ENCODE measurements at regions of chr9 and their contacts with region 1.

Region 1: DNA sequence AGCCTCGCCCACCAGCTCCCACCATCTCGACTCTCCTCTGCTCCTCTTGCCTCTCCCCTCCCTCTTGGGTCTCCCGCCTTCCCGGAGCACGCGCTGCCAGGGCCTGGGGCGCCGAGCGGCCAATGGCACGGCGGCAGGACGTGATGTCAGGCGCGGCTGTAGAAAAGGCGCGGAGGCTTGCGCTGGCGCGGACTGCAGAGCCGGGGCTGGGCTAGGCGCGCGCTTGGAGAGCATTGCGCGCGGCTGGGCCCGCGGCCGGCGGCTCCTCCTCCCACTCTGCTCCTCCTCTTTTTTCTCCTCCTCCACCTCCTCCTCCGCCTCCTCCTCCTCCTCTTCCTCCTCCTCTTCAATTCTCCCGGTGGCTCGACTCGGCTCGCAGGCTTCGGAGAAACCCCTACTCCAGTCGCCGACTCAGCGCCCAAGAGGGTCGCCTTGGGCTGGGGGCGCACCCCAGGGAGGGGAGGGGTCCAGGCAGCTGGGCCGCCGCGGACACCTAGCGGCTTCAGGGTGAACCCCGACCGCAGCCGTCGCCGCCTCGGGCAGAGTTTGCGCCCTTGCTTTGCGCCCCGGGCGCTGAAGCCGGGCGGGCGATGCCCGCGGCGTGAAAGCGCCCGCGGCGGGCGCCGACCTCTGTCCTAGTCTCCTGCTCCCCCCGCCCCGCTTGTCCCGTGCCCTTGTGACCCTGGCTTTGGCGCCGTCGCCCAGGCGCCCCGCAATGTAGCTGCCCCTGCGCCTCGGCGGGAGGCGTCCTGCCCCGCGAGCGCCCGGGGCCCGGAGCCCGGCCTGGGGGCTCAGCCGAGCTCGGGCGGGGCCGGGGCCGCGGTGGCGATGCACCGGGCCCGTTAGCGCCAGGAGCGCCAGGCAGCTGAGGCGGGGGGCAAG is at the start of gene LHX2:
- DNase-seq: peak; percentile 83
- ATAC-seq: peak; percentile 80
- H3K4me3 Mint-ChIP-seq: peak within 1 kb of the TSS; percentile 23
- H3K27ac Mint-ChIP-seq: no peak within 1 kb of the TSS
- H3K4me1 Mint-ChIP-seq: peaks cover 29% of the 10 kb centered on the region
- H3K27me3 Mint-ChIP-seq: peaks cover 64% of the 10 kb centered on the region
- total RNA-seq, gene LHX2: not detected

Region 2: DNA sequence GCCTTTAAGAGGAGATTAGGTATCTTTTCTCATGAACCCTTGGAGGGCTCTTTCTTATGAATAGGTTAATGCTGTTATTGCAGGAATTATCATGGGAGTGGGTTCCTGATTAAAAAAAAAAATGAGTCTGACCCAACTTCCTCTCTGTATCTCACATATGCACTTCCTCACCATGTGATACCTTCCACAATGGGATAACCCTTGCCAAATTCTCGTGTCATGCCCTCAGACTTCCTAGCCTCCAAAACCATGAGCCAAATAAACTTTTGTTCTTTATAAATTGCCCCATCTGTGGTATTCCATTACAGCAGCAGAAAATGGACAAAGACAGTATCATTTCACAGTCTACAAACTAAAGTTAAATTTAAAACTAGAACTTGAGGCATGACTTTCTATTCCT is 1355.3 kb before region 1 on chr9:
- CTCF ChIA-PET with region 1: no interaction called
- POLR2A ChIA-PET with region 1: no interaction called
- intact Hi-C with region 1: no loop called
- DNase-seq: no peak
- ATAC-seq: no peak
- H3K4me3 Mint-ChIP-seq: no peak overlapping the region
- H3K27ac Mint-ChIP-seq: no peak overlapping the region
- H3K4me1 Mint-ChIP-seq: no peaks in the 10 kb centered on the region
- H3K27me3 Mint-ChIP-seq: peaks cover 3% of the 10 kb centered on the region

Region 3: DNA sequence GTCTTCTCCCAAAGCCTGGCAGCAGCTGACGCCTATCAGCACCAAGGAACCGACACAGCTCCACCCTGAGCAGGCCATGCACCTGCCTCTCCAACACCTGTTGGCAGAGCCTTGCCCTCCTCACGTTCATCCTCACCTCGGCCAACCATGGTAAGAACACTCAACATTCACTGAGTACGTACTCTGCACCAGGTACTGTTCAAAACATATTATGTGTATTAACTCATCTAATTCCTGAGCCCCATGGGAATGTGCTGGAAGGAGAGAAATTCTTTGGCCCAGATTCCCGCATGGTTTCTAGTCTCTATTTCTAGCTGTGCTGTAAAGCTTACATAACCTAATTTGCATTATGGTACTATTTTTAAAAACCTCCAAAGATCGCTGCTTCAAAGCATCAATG is 892.1 kb before region 1 on chr9:
- CTCF ChIA-PET with region 1: no interaction called
- POLR2A ChIA-PET with region 1: no interaction called
- intact Hi-C with region 1: no loop called
- DNase-seq: no peak
- ATAC-seq: no peak
- H3K4me3 Mint-ChIP-seq: no peak overlapping the region
- H3K27ac Mint-ChIP-seq: no peak overlapping the region
- H3K4me1 Mint-ChIP-seq: peaks cover 6% of the 10 kb centered on the region
- H3K27me3 Mint-ChIP-seq: no peaks in the 10 kb centered on the region

Region 4: DNA sequence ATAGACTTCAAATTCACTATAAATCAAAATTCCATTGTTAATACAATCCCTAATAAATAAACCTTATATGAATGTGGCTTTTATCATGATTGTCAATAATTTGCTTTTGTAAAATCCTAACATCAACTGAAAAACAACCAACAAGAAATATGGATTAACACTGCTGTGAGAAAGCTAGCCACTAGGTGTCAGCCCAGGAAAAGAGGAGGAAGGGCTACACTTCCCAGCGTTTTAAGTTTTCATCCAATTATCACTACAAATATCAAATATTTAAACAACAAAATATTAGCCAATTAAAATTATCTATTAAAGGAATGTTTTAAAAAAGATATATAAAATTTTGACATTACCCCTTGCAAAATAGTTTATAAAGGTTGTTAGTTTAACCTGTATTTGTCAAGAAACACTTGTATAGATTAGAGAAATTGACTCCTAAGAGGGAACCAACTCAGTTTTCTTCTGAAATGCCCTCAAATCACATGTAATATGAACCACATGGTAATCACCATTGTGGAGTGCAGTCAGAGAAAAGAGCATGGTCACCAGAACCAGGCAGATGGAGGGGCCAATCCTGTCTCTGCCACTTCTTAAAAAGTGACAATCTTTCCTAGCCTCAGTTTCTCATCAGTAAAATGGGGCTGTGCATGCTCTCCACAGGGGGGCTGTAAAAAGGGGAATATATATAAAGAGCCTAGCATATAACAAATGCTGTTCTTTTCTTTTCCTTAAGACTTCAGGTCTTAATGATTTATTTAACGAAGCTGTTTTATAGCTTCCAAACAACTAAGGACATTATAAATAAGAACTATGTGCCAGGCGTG is 467.4 kb before region 1 on chr9:
- CTCF ChIA-PET with region 1: no interaction called
- POLR2A ChIA-PET with region 1: no interaction called
- intact Hi-C with region 1: loop called in 1 of 2 experiments (anchors 10 kb)
- DNase-seq: peak; percentile 44
- ATAC-seq: no peak
- H3K4me3 Mint-ChIP-seq: no peak overlapping the region
- H3K27ac Mint-ChIP-seq: no peak overlapping the region
- H3K4me1 Mint-ChIP-seq: peaks cover 8% of the 10 kb centered on the region
- H3K27me3 Mint-ChIP-seq: no peaks in the 10 kb centered on the region

Region 5: GRCh38 chr9:123997665-123998277 is 13.9 kb before region 1 on chr9:
- CTCF ChIA-PET with region 1: no interaction called
- POLR2A ChIA-PET with region 1: no interaction called
- intact Hi-C with region 1: loop called in 1 of 2 experiments (anchors 1 kb)
- DNase-seq: peak; percentile 64
- ATAC-seq: peak; percentile 60
- H3K4me3 Mint-ChIP-seq: peak overlapping the region; percentile 23
- H3K27ac Mint-ChIP-seq: peak overlapping the region; percentile 72
- H3K4me1 Mint-ChIP-seq: peaks cover 35% of the 10 kb centered on the region
- H3K27me3 Mint-ChIP-seq: peaks cover 72% of the 10 kb centered on the region

Measured in activated CD4-positive, alpha-beta T cell treated with anti-CD3 and anti-CD28 coated beads for 36 hours (primary cell).